IMR-90 (cell line): ENCODE measurements at regions of chr1 and their contacts with region 1.

Region 1: GRCh38 chr1:224513787-224514209 is 79.2 kb upstream of the WDR26 start:
- DNase-seq: peak; percentile 74
- ATAC-seq: peak; percentile 82
- H3K4me3 ChIP-seq: no peak overlapping the region
- H3K27ac ChIP-seq: no peak overlapping the region
- H3K4me1 ChIP-seq: peaks cover 15% of the 10 kb centered on the region
- H3K27me3 ChIP-seq: no peaks in the 10 kb centered on the region
- CTCF ChIP-seq: peak; percentile 98
- POLR2A ChIP-seq: peak; percentile 53; the same call in 1 of the 2 replicates
- RAD21 ChIP-seq: peak; percentile 99

Region 2: DNA sequence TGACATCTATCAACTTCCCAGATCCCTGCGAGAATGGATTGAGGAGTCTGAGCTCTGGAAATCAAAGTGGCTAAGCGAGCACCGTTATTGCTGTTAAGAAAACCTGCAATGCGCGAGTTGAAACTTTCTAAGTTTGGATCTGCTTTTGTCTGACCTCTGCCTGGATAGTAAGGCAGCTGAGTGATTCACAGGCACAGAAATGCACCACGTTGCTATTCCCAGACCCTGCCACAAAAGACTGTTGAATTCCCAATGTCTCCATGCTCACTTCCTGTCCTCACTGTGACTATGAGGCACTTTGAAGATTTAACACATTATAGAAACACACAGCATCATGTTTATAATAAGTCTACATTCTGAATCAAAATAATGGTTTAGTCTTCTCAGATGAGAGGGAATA is 75.2 kb after region 1 on chr1:
- CTCF ChIA-PET with region 1: no interaction called
- POLR2A ChIA-PET with region 1: no interaction called
- dilution Hi-C with region 1: loop called (anchors 10 kb)
- in situ Hi-C with region 1: no loop called
- intact Hi-C with region 1: no loop called
- DNase-seq: peak; percentile 63
- ATAC-seq: peak; percentile 48; the same call in 1 of the 2 replicates
- H3K4me3 ChIP-seq: no peak overlapping the region
- H3K27ac ChIP-seq: no peak overlapping the region
- H3K4me1 ChIP-seq: peaks cover 6% of the 10 kb centered on the region
- H3K27me3 ChIP-seq: no peaks in the 10 kb centered on the region
- CTCF ChIP-seq: no peak
- POLR2A ChIP-seq: no peak
- RAD21 ChIP-seq: no peak

Region 3: DNA sequence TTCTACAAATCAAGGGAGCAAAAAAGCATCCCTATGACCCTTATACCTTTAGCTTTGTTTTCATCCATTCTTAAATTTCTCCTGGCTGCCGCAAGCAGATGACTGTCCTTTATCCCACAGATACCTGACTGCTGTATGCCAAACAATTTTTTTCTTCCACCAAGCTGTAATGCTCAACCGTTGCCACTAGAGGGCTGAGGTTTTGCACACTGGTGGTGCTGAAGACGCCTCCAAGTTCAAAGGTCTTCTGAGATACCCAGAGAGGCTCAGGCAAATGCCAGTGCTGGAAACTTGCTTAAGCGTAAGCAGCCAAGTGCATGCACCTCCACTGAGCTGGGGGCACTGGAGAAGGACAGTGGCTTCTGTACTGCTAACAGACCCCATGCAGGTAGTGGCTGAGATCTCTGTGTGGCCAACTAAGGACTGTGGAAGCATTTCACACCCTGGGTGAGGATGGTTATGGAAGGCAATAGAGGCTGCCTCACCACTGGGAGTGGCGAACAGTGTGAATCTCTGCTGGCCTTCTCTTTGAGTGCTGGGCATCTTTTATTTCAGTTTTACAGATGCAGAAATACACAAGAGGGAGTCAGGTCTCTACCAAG is 130.9 kb after region 1 on chr1:
- CTCF ChIA-PET with region 1: interaction called, 4 read pairs
- POLR2A ChIA-PET with region 1: no interaction called
- dilution Hi-C with region 1: no loop called
- in situ Hi-C with region 1: loop called (anchors 5 kb)
- intact Hi-C with region 1: loop called (anchors 1 kb)
- DNase-seq: peak; percentile 55
- ATAC-seq: peak; percentile 96
- H3K4me3 ChIP-seq: no peak overlapping the region
- H3K27ac ChIP-seq: no peak overlapping the region
- H3K4me1 ChIP-seq: peaks cover 6% of the 10 kb centered on the region; the same call in 1 of the 2 replicates
- H3K27me3 ChIP-seq: no peaks in the 10 kb centered on the region
- CTCF ChIP-seq: peak; percentile 74
- POLR2A ChIP-seq: no peak
- RAD21 ChIP-seq: peak; percentile 65

Region 4: GRCh38 chr1:224929335-224930237 is 415.8 kb after region 1 on chr1 and contains the start of gene DNAH14:
- CTCF ChIA-PET with region 1: interaction called, 3 read pairs
- POLR2A ChIA-PET with region 1: no interaction called
- dilution Hi-C with region 1: no loop called
- in situ Hi-C with region 1: loop called (anchors 5 kb)
- intact Hi-C with region 1: no loop called
- DNase-seq: peak; percentile 60
- ATAC-seq: peak; percentile 99
- H3K4me3 ChIP-seq: peak within 1 kb of the TSS; percentile 52
- H3K27ac ChIP-seq: peak within 1 kb of the TSS; percentile 18; the same call in 1 of the 2 replicates
- H3K4me1 ChIP-seq: no peaks in the 10 kb centered on the region
- H3K27me3 ChIP-seq: no peaks in the 10 kb centered on the region
- CTCF ChIP-seq: no peak
- POLR2A ChIP-seq: 0 out of 2 replicates have a peak, but pooled peaks have one; percentile 28
- RAD21 ChIP-seq: no peak
- total RNA-seq, gene DNAH14: 2.7 and 9.2 TPM in 2 replicates